ENCODE measurements at regions of chr13 and their contacts with region 1.

Region 1: DNA sequence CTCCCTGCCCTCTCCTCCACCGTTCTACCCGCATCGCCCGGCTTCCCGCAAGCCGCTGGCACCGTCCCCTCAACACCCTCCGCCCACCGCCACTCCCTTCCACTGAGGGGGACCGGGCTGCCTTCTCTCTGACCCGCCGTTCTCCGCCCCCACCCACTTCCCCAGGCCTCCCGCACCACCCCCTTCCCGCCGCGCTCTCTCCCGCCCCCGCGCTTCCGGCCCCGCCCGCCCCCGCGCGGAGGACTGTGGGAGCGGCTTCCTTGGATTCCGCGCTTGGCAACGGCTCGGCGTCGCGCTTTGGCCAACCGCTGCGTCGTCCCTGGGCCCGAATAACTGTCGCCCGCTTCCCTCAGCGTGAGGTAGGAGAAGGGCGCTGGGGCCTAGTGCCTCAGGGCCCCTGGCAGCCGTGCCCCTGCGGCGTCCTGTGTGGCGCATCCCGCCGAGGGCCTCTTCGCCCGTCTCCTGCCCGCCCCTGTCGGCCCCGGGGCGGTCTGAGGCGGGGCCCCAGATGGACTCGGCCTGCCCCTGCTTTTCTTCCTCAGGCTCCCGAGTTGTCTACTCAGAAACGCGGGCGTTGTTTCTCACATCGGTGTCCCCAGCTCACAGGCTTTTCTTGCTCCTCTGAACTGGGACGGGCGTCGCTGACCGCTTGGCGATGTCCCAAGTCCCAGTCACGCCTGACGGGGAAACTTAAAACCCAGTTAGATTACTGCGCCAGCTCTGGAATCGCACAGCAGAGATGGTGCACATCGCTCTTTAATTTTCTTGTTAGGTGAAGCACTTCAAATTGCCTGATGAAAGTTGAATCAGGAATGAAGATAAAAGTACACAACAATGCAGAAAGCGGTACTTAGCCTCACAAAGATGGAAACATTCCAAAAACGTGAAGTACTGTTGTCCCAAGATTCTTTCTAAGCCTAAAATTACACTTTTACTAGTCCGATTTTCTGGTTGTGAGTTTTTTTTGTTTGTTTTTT is at the start of gene IFT88:
- DNase-seq: peak; percentile 45 to 93
- H3K4me3 ChIP-seq: peak within 1 kb of the TSS; percentile 60 to 85
- H3K27ac ChIP-seq: peak within 1 kb of the TSS; percentile 85 to 94
- H3K4me1 ChIP-seq: peaks cover 0 to 6% of the 10 kb centered on the region in 2 donors
- H3K27me3 ChIP-seq: no peaks in the 10 kb centered on the region
- CTCF ChIP-seq: peak in 1 of 3 experiments; percentile 22
- total RNA-seq, gene IFT88: 4.9 TPM

Region 2: DNA sequence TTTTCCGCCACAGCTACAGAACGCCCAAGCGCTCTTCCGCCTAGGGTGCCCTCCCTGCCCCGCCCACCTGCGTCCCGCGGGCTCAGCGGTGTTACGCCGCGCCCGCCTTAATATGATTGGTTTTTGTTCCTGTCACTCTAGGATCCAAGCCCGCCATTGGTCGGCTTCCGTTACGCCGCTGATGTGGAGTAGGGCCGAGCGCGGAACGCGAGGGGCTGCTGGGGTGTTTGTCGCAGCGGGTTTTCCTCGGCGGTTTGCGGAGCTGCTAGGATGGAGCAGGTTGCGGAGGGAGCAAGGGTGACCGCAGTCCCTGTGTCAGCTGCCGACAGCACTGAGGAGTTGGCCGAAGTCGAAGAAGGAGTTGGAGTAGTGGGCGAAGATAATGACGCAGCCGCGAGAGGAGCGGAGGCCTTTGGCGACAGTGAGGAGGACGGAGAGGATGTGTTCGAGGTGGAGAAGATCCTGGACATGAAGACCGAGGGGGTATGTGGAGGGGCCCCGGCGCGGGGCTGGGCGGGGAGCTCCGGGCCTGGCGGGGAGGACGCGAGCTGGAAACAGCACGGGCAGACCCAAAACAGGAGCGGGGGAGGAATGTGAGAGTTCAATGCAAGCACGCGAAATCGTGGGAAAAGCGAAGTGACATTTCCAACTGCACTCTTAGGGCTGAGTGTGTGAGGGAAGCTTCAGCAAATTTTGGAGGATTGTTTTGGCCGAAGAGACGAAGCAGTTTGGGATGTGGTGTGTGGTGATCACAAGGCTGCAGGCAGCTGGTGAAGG is 933.5 kb before region 1 on chr13 and contains the start of gene MPHOSPH8:
- intact Hi-C with region 1: loop called (anchors 5 kb)
- DNase-seq: peak; percentile 80 to 97
- H3K4me3 ChIP-seq: peak within 1 kb of the TSS; percentile 71 to 93
- H3K27ac ChIP-seq: peak within 1 kb of the TSS; percentile 92 to 93
- H3K4me1 ChIP-seq: peaks cover 5 to 23% of the 10 kb centered on the region in 2 donors
- H3K27me3 ChIP-seq: no peaks in the 10 kb centered on the region
- CTCF ChIP-seq: no peak
- total RNA-seq, gene MPHOSPH8: 18.5 TPM

Region 3: DNA sequence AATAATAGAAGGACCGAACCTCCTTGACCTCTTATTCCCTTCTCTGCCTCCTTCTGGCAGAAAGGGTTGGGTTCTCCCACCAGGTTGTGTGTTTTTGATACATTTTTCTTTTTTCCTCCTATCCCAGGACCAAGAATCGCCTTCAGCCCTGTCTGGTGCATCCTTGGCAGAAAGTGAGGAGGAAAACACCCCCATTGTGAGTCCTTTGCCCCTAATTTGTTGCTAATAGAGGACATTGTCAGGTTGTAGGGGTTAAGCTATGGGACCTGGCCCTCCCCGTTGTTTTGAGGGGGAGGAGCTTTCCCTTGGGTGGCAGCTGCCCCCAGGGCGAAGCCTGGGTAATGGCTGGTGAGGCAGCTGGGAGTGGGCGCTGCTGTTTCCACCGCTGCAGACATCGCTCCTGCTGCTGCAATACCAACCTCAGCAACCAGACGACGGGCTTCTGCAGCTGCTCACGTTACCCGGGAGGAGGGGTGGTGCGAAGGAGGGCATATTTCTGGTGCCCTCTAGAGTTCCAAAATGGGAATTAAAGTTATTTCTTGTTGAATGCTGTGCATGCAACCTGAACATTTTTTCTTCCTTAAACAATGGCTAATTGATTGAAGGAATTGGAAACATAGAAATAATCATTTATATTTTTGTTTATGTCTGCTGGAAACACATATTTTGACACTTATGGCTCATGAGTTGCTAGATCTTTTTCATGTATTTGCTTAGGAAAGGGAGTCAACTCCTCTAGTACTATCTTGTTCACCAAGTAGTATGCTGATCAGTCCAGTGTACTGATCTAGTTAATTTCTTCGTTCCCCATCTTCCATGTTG is 607.1 kb before region 1 on chr13:
- intact Hi-C with region 1: loop called (anchors 5 kb)
- DNase-seq: peak; percentile 65 to 92
- H3K4me3 ChIP-seq: peak overlapping the region; percentile 75 to 88
- H3K27ac ChIP-seq: peak overlapping the region; percentile 98 to 99
- H3K4me1 ChIP-seq: peaks cover 0 to 31% of the 10 kb centered on the region in 2 donors
- H3K27me3 ChIP-seq: no peaks in the 10 kb centered on the region
- CTCF ChIP-seq: peak; percentile 85 to 92 (median 92)

Region 4: GRCh38 chr13:20294497-20294896 is 272.7 kb before region 1 on chr13:
- intact Hi-C with region 1: no loop called
- DNase-seq: no peak
- H3K4me3 ChIP-seq: no peak overlapping the region
- H3K27ac ChIP-seq: no peak overlapping the region
- H3K4me1 ChIP-seq: no peaks in the 10 kb centered on the region
- H3K27me3 ChIP-seq: no peaks in the 10 kb centered on the region
- CTCF ChIP-seq: no peak

Region 5: DNA sequence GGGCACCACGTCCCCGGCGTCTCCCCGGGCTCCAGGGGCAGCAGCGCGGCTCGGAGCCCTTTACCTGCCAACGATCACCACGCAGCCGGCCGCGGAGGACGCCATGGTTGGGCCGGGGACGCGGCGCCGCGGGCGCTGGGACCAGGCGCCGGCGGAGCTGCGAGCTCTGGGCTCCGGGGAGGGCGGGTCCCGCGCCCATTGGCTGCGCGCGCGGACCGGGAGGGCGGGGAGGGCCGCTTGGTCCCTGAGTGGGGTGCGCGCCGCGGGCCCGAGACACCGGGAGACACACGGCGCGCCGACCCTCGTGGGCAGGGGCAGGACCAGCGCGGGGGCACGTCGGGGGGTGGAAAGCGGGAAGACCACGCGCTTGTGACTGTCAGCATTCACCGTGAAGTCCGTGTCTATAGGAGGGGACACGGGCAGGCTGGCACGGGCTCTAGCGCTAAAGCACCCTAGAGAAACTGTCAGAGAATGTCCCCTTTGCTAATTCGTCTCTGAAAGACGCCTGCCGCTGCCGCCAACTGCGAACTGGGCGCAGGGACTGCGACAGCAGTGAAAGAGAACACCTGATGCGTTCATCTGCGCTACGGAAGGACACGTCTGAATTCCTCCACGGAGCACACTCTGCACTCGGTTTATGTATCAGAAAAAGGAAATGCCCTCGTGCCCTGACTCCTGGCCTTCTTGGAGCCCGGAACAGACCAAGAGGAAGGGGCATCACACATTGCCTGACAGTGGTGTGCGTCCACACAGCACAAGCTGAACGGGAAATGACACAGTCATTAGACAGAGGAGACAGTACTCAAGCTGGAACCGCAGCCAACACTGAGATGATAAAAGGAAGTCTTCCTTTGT is 41.3 kb before region 1 on chr13 and contains the start of gene CRYL1:
- intact Hi-C with region 1: loop called (anchors 1 kb)
- DNase-seq: peak; percentile 66 to 88
- H3K4me3 ChIP-seq: peak within 1 kb of the TSS; percentile 76 to 96
- H3K27ac ChIP-seq: peak within 1 kb of the TSS; percentile 76 to 86
- H3K4me1 ChIP-seq: peaks cover 0 to 6% of the 10 kb centered on the region in 2 donors
- H3K27me3 ChIP-seq: no peaks in the 10 kb centered on the region
- CTCF ChIP-seq: no peak
- total RNA-seq, gene CRYL1: 13.1 TPM

Region 6: DNA sequence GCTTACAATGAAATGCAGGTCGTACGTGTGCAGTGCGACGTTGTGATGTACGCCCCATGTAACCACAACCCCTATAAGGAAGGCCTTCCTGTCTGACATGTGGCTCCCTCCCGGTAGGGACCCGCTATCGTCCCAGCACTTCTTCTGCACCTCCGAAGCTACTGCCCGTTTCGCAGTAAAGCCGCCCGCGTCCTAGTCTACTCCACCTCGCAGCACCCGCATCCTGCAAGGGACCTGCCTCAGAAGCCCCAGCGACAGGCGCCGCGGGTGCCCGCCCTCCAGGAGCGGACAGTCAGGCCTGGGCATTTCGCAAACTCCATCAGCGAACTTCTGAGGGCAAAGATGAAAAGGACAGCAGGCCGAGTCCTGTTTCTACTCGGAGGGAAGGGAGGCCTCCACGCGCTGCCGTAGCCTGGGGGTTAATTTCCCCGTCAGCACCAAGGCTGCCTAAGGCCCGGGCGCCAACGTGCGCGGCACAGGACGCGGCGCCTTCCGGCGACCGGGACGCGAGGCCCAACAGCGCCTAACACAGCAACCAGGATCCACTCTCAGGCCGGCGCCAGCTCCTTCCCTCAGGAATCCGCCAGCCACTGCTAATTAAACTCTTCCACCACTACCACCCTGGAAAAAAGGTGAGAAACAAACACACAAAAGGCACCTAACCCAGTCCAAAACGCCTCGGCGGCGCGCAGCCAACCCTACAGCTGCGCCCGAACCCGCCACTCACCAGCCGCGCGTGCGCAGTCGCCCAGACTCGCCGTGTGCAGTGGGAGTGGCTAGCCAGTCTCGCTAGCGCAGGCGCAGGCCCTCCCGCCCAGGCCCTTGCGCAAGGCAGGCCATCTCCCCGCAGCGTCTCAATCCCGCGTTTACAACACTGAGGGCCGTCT is 206.3 kb after region 1 on chr13 and contains the start of gene EEF1AKMT1:
- intact Hi-C with region 1: loop called (anchors 2 kb)
- DNase-seq: peak; percentile 60 to 96
- H3K4me3 ChIP-seq: peak within 1 kb of the TSS; percentile 61 to 80
- H3K27ac ChIP-seq: peak within 1 kb of the TSS; percentile 85 to 87
- H3K4me1 ChIP-seq: peaks cover 0 to 7% of the 10 kb centered on the region in 2 donors
- H3K27me3 ChIP-seq: no peaks in the 10 kb centered on the region
- CTCF ChIP-seq: no peak
- total RNA-seq, gene EEF1AKMT1: not detected

Region 7: DNA sequence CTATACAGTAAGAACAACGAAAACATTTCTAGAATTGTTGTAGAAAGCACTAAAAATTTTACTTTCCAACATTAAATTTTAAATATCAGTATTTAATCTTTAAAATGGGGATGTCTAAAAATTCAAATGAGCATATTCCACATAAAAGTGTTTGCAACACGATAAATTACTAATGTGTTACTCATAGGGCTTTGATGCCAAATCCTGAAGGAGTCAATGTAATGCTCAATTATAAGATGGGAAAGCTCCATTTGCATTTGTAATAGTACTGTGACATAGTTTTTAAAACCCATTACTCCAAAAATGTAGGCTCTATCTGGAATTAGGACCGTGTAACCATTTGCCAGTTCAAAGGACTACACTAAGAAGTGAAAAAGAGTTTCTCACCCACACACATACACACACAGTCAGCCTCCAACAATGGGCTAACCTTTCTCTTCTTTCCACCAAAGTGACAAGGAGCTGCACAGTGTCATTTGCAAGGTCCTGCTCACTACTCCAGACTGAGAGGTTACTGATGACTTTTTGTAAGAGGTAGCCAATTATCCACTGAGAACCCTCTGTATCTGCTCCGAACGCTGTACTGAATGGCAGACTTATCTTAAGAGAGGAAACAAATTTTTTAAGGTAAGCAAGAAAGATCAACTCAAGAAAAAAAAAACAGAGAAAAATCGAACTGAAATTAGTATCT is 232.7 kb after region 1 on chr13:
- intact Hi-C with region 1: no loop called
- DNase-seq: no peak
- H3K4me3 ChIP-seq: no peak overlapping the region
- H3K27ac ChIP-seq: no peak overlapping the region
- H3K4me1 ChIP-seq: peaks cover 0 to 3% of the 10 kb centered on the region in 2 donors
- H3K27me3 ChIP-seq: no peaks in the 10 kb centered on the region
- CTCF ChIP-seq: no peak

Region 8: GRCh38 chr13:21297914-21298831 is 731.0 kb after region 1 on chr13:
- intact Hi-C with region 1: loop called (anchors 5 kb)
- DNase-seq: peak; percentile 18 to 89
- H3K4me3 ChIP-seq: peak overlapping the region; percentile 88 to 94
- H3K27ac ChIP-seq: peak overlapping the region; percentile 73 to 81
- H3K4me1 ChIP-seq: peaks cover 0 to 6% of the 10 kb centered on the region in 2 donors
- H3K27me3 ChIP-seq: no peaks in the 10 kb centered on the region
- CTCF ChIP-seq: peak; percentile 86 to 88 (median 87)

Measured in ascending aorta (tissue), 2 donors.